Activated CD4-positive, alpha-beta memory T cell treated with anti-CD3 and anti-CD28 coated beads for 36 hours (primary cell): ENCODE measurements at regions of chr4 and their contacts with region 1.

Region 1: DNA sequence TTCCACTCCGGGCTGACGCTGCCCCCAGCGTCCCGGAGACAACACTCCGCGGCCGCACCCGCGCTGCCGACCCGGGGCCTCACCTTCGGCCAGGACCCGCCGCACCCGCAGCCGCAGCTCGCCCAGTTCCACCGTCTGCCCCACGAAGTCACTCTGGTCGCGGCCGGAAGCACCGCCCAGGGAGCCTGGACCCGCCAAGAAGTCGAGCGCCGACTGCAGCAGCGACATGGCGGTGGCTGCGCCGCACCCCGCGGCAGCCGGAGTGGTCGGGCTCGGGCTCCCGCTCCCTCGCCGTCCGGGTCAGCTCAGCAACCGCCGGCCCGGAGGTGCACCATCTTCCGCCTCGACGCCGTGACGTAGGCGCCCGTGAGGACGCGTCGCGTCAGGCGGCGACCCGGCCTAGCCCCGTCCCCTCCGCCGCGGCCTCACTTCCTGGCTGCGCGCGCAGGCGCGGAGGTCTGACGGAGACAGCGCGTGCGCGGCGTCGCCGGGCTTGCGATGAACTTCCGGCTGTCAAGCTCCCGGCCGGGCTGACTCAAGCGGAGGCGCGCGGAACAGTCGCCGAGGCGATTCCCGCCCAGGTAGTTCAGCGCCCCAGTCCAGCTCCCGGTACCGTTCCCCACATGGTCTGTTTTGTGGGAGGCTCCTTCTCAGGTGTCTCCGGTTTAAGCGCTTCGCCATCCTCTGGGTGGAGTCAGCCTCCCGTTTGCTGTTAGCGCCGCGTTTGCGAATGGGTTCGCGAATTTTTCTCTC is at the starts of genes GAK and TMEM175:
- DNase-seq: peak; percentile 98
- H3K4me3 Mint-ChIP-seq: peak within 1 kb of the TSS; percentile 97
- H3K27ac Mint-ChIP-seq: peak within 1 kb of the TSS; percentile 80
- H3K4me1 Mint-ChIP-seq: peaks cover 43% of the 10 kb centered on the region
- H3K27me3 Mint-ChIP-seq: no peaks in the 10 kb centered on the region
- total RNA-seq, gene GAK: 97.0 to 101 TPM
- total RNA-seq, gene TMEM175: 13.8 to 15.8 TPM

Region 2: DNA sequence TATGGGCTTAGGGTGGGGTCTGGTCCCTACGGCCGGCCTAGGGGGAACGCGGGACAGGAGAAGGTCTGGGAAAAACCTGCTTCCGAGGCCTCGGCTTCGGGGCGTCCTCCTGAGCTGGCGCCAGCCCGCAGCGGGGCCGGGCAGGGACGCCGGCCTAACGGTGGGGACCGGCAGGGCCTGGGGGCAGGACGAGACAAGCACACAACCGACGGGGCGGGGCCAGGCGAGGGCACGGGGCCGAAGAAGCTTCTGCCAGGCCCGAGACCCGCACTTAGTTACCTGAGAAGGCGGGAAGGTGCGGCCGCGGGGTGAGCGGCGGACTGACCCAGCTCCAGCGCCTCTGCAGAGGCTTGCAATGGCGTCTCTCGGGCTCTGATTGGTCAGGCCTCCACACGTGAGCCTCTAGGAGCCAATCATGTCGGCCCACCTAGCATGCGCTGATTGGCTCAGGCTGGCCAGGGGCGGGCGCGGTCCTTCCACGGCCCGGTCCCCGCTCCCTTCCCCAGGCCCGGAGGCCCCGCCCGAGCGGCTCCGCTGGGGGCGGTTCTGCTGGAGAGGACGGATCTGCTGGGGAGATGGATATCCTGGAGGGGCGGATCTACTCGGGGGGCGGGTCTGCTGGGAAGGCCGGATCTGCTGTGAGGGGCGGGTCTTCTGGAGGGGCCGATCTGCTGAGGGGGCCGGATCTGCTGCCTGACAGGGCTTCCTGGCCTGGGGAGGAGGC is 150.5 kb before region 1 on chr4:
- CTCF ChIA-PET with region 1: no interaction called
- POLR2A ChIA-PET with region 1: no interaction called
- intact Hi-C with region 1: loop called (anchors 1 kb)
- DNase-seq: peak; percentile 100
- H3K4me3 Mint-ChIP-seq: peak overlapping the region; percentile 83
- H3K27ac Mint-ChIP-seq: peak overlapping the region; percentile 90
- H3K4me1 Mint-ChIP-seq: peaks cover 47% of the 10 kb centered on the region
- H3K27me3 Mint-ChIP-seq: peaks cover 17% of the 10 kb centered on the region

Region 3: GRCh38 chr4:921830-922331 is 10.3 kb before region 1 on chr4:
- CTCF ChIA-PET with region 1: interaction called, 5 read pairs
- POLR2A ChIA-PET with region 1: interaction called, 6 read pairs
- intact Hi-C with region 1: loop called (anchors 1 kb)
- DNase-seq: peak; percentile 47
- H3K4me3 Mint-ChIP-seq: peak overlapping the region; percentile 20
- H3K27ac Mint-ChIP-seq: peak overlapping the region; percentile 55
- H3K4me1 Mint-ChIP-seq: peaks cover 63% of the 10 kb centered on the region
- H3K27me3 Mint-ChIP-seq: no peaks in the 10 kb centered on the region

Region 4: GRCh38 chr4:973431-974397 is 41.6 kb after region 1 on chr4 and contains the start of gene DGKQ:
- CTCF ChIA-PET with region 1: no interaction called
- POLR2A ChIA-PET with region 1: no interaction called
- intact Hi-C with region 1: loop called (anchors 1 kb)
- DNase-seq: peak; percentile 92
- H3K4me3 Mint-ChIP-seq: peak within 1 kb of the TSS; percentile 55
- H3K27ac Mint-ChIP-seq: no peak within 1 kb of the TSS
- H3K4me1 Mint-ChIP-seq: peaks cover 8% of the 10 kb centered on the region
- H3K27me3 Mint-ChIP-seq: no peaks in the 10 kb centered on the region
- total RNA-seq, gene DGKQ: 11.1 to 11.4 TPM

Region 5: GRCh38 chr4:986879-987623 is 54.9 kb after region 1 on chr4 and contains the start of gene IDUA:
- CTCF ChIA-PET with region 1: interaction called, 15 read pairs
- POLR2A ChIA-PET with region 1: interaction called, 5 read pairs
- intact Hi-C with region 1: loop called (anchors 1 kb)
- DNase-seq: peak; percentile 92
- H3K4me3 Mint-ChIP-seq: peak within 1 kb of the TSS; percentile 88
- H3K27ac Mint-ChIP-seq: peak within 1 kb of the TSS; percentile 72
- H3K4me1 Mint-ChIP-seq: peaks cover 21% of the 10 kb centered on the region
- H3K27me3 Mint-ChIP-seq: no peaks in the 10 kb centered on the region
- total RNA-seq, gene IDUA: 9.0 to 10.1 TPM

Region 6: GRCh38 chr4:1011022-1011694 is 79.0 kb after region 1 on chr4 and contains the start of gene FGFRL1:
- CTCF ChIA-PET with region 1: no interaction called
- POLR2A ChIA-PET with region 1: no interaction called
- intact Hi-C with region 1: loop called (anchors 5 kb)
- DNase-seq: peak; percentile 95
- H3K4me3 Mint-ChIP-seq: peak within 1 kb of the TSS; percentile 69
- H3K27ac Mint-ChIP-seq: peak within 1 kb of the TSS; percentile 76
- H3K4me1 Mint-ChIP-seq: peaks cover 10% of the 10 kb centered on the region
- H3K27me3 Mint-ChIP-seq: peaks cover 27% of the 10 kb centered on the region
- total RNA-seq, gene FGFRL1: 12.2 to 15.1 TPM